Activated naive CD4-positive, alpha-beta T cell treated with anti-CD3 and anti-CD28 coated beads for 36 hours (primary cell): ENCODE measurements at regions of chr11 and their contacts with region 1.

Region 1: GRCh38 chr11:20647976-20648565 is 21.3 kb upstream of the NELL1 start:
- DNase-seq: peak; percentile 55
- H3K4me3 Mint-ChIP-seq: no peak overlapping the region
- H3K27ac Mint-ChIP-seq: no peak overlapping the region
- H3K4me1 Mint-ChIP-seq: no peaks in the 10 kb centered on the region
- H3K27me3 Mint-ChIP-seq: peaks cover 5% of the 10 kb centered on the region

Region 2: GRCh38 chr11:20671856-20672546 is 23.9 kb after region 1 on chr11:
- CTCF ChIA-PET with region 1: interaction called, 22 read pairs
- intact Hi-C with region 1: loop called (anchors 1 kb)
- DNase-seq: no peak
- H3K4me3 Mint-ChIP-seq: no peak overlapping the region
- H3K27ac Mint-ChIP-seq: no peak overlapping the region
- H3K4me1 Mint-ChIP-seq: peaks cover 12% of the 10 kb centered on the region
- H3K27me3 Mint-ChIP-seq: peaks cover 66% of the 10 kb centered on the region

Region 3: DNA sequence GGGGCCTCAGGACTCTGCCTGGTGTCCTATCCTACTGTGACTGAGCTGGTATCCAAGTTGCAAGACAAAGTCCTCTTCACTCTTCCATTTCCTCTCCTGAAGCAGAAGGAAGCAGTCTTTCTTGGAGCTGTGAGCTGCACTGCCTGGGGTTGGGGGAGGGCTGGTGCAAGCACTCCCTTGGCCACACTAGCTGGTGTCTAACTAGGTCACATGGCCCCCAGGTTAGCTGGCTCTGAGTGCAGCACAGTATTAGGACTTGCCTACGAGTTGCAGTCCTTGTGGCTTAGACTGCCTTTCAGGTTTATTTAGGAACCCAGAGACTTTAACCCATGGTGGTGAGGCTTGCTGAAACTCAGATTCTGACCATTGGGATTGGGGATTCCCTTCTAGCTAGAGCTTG is 160.3 kb after region 1 on chr11:
- CTCF ChIA-PET with region 1: no interaction called
- intact Hi-C with region 1: no loop called
- DNase-seq: no peak
- H3K4me3 Mint-ChIP-seq: no peak overlapping the region
- H3K27ac Mint-ChIP-seq: no peak overlapping the region
- H3K4me1 Mint-ChIP-seq: no peaks in the 10 kb centered on the region
- H3K27me3 Mint-ChIP-seq: no peaks in the 10 kb centered on the region

Region 4: DNA sequence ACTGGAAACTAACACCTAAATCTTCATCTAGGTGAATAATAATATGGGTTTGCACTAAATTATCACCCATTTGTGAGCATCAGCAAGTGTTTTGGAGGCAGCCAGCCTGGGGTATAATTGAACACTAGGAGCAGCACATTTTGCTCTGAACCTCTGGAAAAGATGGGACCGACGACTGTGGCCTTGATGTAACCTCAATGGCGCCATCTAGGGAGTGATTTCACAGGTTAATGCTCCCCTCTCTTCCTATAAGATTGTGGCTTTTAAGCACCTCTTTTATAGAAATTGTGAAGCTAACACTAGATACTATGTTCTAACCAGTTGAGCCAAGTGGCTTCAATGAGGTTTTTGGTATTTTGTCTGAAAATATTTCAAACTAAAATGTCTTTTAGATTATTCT is 225.0 kb after region 1 on chr11:
- CTCF ChIA-PET with region 1: no interaction called
- intact Hi-C with region 1: loop called (anchors 1 kb)
- DNase-seq: peak; percentile 23
- H3K4me3 Mint-ChIP-seq: no peak overlapping the region
- H3K27ac Mint-ChIP-seq: no peak overlapping the region
- H3K4me1 Mint-ChIP-seq: no peaks in the 10 kb centered on the region
- H3K27me3 Mint-ChIP-seq: no peaks in the 10 kb centered on the region

Region 5: GRCh38 chr11:21511835-21512440 is 863.9 kb after region 1 on chr11:
- CTCF ChIA-PET with region 1: interaction called, 5 read pairs
- intact Hi-C with region 1: loop called (anchors 1 kb)
- DNase-seq: peak; percentile 59
- H3K4me3 Mint-ChIP-seq: no peak overlapping the region
- H3K27ac Mint-ChIP-seq: no peak overlapping the region
- H3K4me1 Mint-ChIP-seq: no peaks in the 10 kb centered on the region
- H3K27me3 Mint-ChIP-seq: no peaks in the 10 kb centered on the region

Region 6: DNA sequence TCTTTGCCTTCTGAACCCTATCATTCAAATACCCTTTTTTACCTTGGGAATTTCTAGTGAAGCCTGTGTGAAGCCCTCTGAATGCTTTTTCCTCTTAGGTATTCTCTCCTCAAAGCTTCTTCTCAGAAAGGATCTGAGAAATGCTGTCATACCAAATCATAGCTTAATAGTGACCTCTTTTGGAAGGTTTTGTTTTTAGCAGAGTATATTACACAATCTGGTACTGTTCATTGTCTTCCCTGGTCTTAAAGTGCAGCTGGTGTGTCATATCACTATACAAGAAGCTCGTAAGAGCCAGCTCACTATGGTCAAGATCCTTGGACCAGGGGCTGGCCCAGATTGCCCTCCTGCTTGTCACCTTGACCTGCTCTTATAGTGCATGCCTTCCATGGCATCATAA is 1340.4 kb after region 1 on chr11:
- CTCF ChIA-PET with region 1: no interaction called
- intact Hi-C with region 1: loop called (anchors 5 kb)
- DNase-seq: no peak
- H3K4me3 Mint-ChIP-seq: no peak overlapping the region
- H3K27ac Mint-ChIP-seq: no peak overlapping the region
- H3K4me1 Mint-ChIP-seq: no peaks in the 10 kb centered on the region
- H3K27me3 Mint-ChIP-seq: no peaks in the 10 kb centered on the region

Region 7: GRCh38 chr11:22130462-22131053 is 1482.5 kb after region 1 on chr11:
- CTCF ChIA-PET with region 1: no interaction called
- intact Hi-C with region 1: loop called (anchors 10 kb)
- DNase-seq: no peak
- H3K4me3 Mint-ChIP-seq: no peak overlapping the region
- H3K27ac Mint-ChIP-seq: no peak overlapping the region
- H3K4me1 Mint-ChIP-seq: no peaks in the 10 kb centered on the region
- H3K27me3 Mint-ChIP-seq: no peaks in the 10 kb centered on the region

Region 8: DNA sequence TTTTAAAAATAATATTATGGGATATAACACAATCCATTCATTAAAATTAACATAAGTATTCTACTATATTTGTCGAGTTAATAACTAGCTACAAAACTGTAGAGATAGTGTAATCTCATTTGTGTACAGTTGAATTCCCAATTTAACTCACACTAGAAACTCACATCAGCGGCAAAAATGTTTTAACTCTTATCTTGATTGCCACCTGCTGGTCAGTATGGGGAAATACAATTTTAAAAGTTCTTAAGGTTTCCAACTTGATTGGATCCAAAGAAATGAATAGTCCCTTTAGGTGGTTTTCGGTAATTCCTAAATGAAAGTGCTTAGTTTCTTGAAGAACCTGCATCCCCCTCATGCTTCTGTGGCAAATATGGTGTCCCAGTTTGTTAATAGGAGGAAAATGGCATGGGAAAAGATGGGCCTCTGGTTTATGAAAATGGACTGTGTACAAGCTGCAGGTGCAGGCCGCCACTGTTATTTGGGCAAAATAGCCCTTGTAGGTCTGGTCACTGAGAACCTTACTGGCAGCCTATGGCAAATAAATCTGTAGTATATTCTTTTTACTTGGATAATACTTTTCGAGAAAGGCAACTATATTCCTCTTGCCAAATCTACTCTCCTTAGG is 1656.4 kb after region 1 on chr11:
- CTCF ChIA-PET with region 1: interaction called, 9 read pairs
- intact Hi-C with region 1: loop called (anchors 1 kb)
- DNase-seq: no peak
- H3K4me3 Mint-ChIP-seq: no peak overlapping the region
- H3K27ac Mint-ChIP-seq: no peak overlapping the region
- H3K4me1 Mint-ChIP-seq: no peaks in the 10 kb centered on the region
- H3K27me3 Mint-ChIP-seq: peaks cover 15% of the 10 kb centered on the region